ENCODE measurements at regions of chr7 and their contacts with region 1.

Region 1: DNA sequence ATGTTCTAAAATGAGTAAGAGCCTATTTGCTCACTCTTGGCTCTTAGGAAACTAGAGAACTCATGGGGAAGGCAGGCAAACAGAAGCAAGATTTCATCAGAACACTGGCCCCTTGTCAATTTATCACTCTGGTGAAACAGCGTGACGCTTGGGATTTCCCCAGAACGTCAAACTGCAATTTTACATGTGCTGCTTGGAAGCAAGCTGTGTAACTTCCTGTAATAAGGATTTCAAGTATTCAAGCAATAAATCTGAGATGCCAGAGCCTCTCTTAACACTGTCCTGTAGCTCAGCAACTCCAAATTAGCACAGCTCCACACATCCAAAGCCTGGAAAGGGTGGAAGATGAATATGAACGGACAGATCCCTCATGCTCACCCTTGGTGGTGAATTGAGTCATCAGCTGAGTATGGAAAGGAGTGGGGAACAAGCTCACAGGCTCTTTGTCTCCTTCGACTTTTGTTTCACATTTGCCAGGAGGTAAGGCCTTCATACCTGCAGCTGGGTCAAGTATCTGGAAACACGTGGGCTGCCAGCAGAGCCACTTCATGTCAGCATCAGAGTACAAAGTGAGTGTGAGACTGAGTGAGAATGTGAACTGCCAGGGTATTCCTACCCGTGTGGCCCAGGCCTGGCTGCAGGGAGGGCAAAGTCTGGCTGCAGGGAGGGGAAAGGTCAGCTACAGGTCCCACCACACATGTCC is 140.4 kb upstream of the NAMPT start:
- DNase-seq: peak; percentile 88
- H3K4me3 Mint-ChIP-seq: peak overlapping the region; percentile 74
- H3K27ac Mint-ChIP-seq: peak overlapping the region; percentile 96
- H3K4me1 Mint-ChIP-seq: peaks cover 74% of the 10 kb centered on the region
- H3K27me3 Mint-ChIP-seq: no peaks in the 10 kb centered on the region

Region 2: GRCh38 chr7:105522062-105522936 is 902.9 kb before region 1 on chr7 and contains the start of gene PUS7:
- intact Hi-C with region 1: loop called (anchors 10 kb)
- DNase-seq: peak; percentile 92
- H3K4me3 Mint-ChIP-seq: peak within 1 kb of the TSS; percentile 99
- H3K27ac Mint-ChIP-seq: peak within 1 kb of the TSS; percentile 99
- H3K4me1 Mint-ChIP-seq: peaks cover 15% of the 10 kb centered on the region
- H3K27me3 Mint-ChIP-seq: no peaks in the 10 kb centered on the region
- total RNA-seq, gene PUS7: 51.9 and 54.5 TPM in 2 replicates

Region 3: DNA sequence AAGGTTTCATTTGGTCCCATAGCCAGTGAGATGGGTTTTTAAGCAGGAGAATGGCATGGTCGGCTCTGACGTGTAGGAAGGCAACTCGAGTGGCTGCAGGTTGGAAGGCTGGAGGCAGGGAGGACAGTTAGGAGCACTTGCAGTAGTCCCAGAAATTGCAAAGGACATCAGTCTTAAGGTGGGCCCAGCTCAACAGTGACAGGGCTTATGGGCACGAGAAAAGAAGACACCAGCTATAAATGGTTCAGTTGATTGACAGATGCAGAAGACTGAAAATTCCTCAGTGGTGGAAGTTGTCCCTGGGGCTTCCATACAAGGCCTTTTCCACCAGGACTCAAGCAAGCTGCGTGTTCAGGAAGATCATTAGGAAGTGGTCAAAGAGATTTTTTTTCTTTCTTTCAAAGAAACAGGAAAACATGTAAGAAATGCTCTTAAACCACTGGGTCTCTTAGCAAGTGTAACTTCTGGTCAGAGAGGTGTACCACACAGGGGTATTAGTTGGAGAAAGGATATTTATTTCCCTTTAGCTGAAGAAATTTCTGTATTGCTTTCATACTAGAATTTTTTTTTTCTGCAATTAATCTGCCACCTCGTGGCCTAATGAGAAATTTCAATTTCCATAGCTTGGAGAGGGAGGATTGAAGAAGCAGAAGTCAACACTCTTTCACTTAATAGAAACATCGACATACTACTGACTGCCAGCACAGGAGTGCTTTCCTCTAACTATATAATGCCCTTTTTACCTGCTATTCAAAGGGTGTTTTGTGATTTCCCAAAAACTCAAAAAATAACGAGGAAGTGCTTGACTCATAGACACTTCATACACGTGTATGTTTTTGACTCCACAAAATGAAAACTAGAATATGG is 37.1 kb after region 1 on chr7:
- intact Hi-C with region 1: loop called (anchors 2 kb)
- DNase-seq: peak; percentile 76
- H3K4me3 Mint-ChIP-seq: no peak overlapping the region
- H3K27ac Mint-ChIP-seq: no peak overlapping the region
- H3K4me1 Mint-ChIP-seq: peaks cover 19% of the 10 kb centered on the region
- H3K27me3 Mint-ChIP-seq: no peaks in the 10 kb centered on the region

Region 4: GRCh38 chr7:106717955-106718871 is 293.0 kb after region 1 on chr7:
- intact Hi-C with region 1: loop called (anchors 5 kb)
- DNase-seq: peak; percentile 85
- H3K4me3 Mint-ChIP-seq: no peak overlapping the region
- H3K27ac Mint-ChIP-seq: no peak overlapping the region
- H3K4me1 Mint-ChIP-seq: peaks cover 22% of the 10 kb centered on the region
- H3K27me3 Mint-ChIP-seq: no peaks in the 10 kb centered on the region

Region 5: DNA sequence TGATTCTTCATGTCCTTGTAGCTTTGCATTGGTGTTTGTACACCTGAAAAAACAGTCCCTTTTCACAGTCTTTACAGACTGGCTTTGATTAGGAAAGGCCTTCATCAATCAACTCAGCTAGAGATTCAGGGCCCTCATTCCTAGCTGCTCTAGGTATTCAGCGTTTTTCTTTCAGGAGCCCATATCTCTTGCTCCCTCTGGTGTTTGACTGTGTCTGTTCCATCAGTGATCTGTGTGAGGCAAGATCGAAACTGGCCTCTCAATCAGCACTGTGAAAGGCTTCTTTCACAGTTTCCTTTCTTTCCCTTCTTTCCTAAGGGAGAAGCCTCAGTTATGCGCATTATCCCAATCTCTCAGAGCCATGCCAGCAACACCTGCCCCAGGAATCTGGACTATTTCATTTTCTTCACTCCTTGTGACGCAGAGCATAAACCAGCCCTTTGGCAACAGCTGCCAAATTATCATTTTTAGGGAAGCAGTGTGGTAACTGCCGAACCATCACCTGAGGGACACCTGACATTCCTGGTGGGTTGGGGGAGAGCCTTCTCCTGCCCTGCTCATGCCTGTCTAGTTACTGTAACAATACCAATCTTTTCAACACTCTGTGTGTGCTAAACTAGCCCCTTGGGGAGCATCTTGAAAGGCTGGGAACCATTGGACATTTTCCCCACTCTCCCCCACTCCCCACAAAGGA is 311.5 kb after region 1 on chr7:
- intact Hi-C with region 1: no loop called
- DNase-seq: peak; percentile 86
- H3K4me3 Mint-ChIP-seq: peak overlapping the region; percentile 8
- H3K27ac Mint-ChIP-seq: peak overlapping the region; percentile 12
- H3K4me1 Mint-ChIP-seq: peaks cover 32% of the 10 kb centered on the region
- H3K27me3 Mint-ChIP-seq: no peaks in the 10 kb centered on the region

Region 6: DNA sequence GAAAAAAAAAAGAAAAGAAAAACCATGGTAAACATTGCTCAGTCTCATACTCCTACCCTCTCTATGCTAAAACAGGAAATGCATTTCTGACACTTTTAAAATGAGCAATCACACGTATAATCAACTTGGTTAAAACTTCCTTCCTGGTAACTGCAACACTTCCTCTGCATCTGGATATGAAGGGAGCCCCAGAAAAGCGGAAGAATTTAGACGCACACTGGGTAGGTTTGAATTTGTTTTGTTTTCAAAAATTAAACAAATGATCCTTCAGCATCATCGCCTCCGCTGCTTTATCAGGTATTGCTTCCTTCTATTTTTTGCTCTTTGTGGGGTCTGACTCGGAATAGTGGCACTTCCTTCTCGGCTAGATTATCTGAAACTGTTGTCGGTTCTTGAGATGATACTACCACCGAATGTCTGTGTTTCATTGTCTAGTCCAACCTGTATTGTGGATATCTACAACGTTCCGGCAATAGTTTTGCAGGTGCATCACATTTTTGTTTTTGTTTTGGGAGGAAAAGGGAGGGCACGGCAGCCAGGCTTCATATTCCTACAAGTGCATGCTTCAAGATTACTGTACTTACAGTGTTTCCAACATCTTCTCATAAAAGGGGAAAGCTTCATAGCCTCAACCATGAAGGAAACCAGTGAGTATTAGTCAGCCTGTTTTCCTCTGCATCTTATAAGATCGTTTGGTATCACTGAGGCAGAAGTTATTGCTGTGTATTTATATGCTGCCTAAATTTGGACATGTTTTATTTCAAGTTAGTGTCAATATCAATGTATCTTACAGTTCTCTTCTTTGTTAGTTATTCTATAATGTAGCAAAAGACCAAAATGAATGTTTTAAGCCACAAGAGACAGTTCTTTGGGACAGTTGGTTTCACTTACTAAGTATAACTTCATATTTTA is 440.2 kb after region 1 on chr7 and contains the start of gene PIK3CG:
- intact Hi-C with region 1: loop called (anchors 5 kb)
- DNase-seq: peak; percentile 80
- H3K4me3 Mint-ChIP-seq: peak within 1 kb of the TSS; percentile 95
- H3K27ac Mint-ChIP-seq: peak within 1 kb of the TSS; percentile 93
- H3K4me1 Mint-ChIP-seq: peaks cover 42% of the 10 kb centered on the region
- H3K27me3 Mint-ChIP-seq: no peaks in the 10 kb centered on the region
- total RNA-seq, gene PIK3CG: 28.1 and 29.2 TPM in 2 replicates

Measured in activated CD4-positive, alpha-beta T cell treated with anti-CD3 and anti-CD28 coated beads, Interleukin-2, amount 10 ng/mL, durations not matched to agents 24 days and 14 days (primary cell).